ENCODE measurements at regions of chr7 and their contacts with region 1.

Region 1: DNA sequence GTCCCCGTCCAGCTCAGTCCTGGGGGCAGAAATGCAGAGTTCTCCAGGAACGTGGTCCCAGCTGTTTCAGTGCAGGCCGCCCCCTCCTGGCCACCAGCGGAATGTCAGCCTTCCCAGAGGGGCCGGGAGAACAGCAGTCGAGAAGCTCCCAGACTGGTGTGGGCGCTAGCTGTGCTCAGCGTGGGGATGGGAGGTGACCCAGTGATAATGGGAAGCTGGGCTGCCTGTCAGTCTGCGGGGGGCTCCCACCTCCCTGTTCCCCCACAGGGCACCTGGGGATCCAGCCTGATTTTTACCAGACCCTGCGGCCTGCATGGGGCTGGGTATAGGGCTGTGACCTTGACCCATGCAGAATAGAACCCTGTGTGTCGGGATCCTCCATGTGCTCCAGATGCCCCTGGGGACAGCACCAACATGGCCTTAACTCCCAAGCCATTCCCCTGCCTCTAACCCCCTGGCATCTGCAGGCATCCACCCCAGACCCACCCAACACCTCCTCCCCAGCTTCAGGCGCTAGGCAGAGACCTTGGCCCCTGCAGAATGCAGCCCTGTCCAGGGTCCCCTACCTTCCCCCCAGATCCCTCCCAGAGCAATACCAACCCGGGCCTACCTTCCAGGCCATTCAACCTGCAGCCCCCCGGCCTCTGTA is 946 bp upstream of the ELN start:
- DNase-seq: peak; percentile 43 to 64 (median 64)
- H3K4me3 ChIP-seq: peak overlapping the region in 1 of 7 experiments; percentile 19
- H3K27ac ChIP-seq: no peak overlapping the region
- H3K4me1 ChIP-seq: peaks cover 15 to 91% (median 83%) of the 10 kb centered on the region in 4 experiments
- H3K27me3 ChIP-seq: no peaks in the 10 kb centered on the region

Region 2: GRCh38 chr7:73856941-73857340 is 170.1 kb before region 1 on chr7:
- CTCF ChIA-PET with region 1: interaction called, 21 read pairs
- POLR2A ChIA-PET with region 1: interaction called, 7 read pairs
- DNase-seq: no peak
- H3K4me3 ChIP-seq: no peak overlapping the region
- H3K27ac ChIP-seq: no peak overlapping the region
- H3K4me1 ChIP-seq: peaks cover 0 to 7% (median 5%) of the 10 kb centered on the region in 4 experiments
- H3K27me3 ChIP-seq: peaks cover 0 to 21% (median 9%) of the 10 kb centered on the region in 5 experiments

Region 3: GRCh38 chr7:73885975-73886798 is 140.8 kb before region 1 on chr7:
- CTCF ChIA-PET with region 1: interaction called, 84 read pairs
- POLR2A ChIA-PET with region 1: interaction called, 30 read pairs
- DNase-seq: peak; percentile 95 to 99 (median 97)
- H3K4me3 ChIP-seq: peak overlapping the region in 3 of 7 experiments; percentile 7 to 35 (median 24)
- H3K27ac ChIP-seq: peak overlapping the region; percentile 80 to 87
- H3K4me1 ChIP-seq: peaks cover 0 to 49% (median 31%) of the 10 kb centered on the region in 4 experiments
- H3K27me3 ChIP-seq: no peaks in the 10 kb centered on the region

Region 4: DNA sequence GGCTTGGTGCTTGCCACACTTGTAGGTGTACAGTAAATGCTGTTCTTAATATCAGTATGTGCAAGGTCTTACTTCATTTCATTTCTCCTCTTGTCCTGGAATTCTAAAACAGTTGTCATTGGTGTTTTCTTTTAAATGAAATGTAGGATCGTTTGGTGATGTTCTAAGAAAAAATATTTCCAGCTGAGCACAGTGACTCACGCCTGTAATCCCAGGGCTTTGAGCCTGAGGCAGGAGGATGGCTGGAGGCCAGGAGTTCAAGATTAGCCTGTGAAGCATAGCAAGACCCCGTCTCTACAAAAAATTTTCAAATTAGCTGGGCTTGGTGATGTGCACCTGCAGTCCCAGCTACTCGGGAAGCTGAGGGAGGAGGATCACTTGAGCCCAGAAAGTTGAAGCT is 31.7 kb before region 1 on chr7:
- CTCF ChIA-PET with region 1: interaction called, 18 read pairs
- POLR2A ChIA-PET with region 1: interaction called, 7 read pairs
- DNase-seq: no peak
- H3K4me3 ChIP-seq: no peak overlapping the region
- H3K27ac ChIP-seq: no peak overlapping the region
- H3K4me1 ChIP-seq: peaks cover 0 to 7% (median under 1%) of the 10 kb centered on the region in 4 experiments
- H3K27me3 ChIP-seq: no peaks in the 10 kb centered on the region

Region 5: DNA sequence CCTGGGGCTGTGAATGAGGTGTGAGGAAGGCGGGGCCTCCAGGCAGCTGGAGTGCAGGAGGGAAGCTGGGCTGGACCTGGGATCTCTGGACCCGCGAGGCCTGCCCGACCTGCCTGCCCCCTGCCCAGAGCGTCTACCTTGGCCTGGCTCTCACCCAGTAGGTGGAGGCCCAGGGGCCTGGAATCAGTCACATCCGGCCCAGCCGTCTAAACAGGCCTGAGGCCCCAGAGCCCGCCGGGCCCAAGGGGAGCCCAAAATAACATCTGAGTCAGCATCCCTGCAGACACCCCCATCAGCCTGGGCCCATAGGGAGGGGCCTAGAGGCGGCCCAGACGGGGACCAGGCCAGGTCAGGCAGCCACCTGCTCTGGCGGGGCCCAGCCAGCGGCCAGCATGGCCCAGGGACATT is 14.2 kb before region 1 on chr7:
- CTCF ChIA-PET with region 1: interaction called, 98 read pairs
- POLR2A ChIA-PET with region 1: interaction called, 9 read pairs
- DNase-seq: peak; percentile 56 to 90 (median 88)
- H3K4me3 ChIP-seq: peak overlapping the region in 2 of 7 experiments; percentile 16 to 36
- H3K27ac ChIP-seq: no peak overlapping the region
- H3K4me1 ChIP-seq: peaks cover 0 to 44% (median 37%) of the 10 kb centered on the region in 4 experiments
- H3K27me3 ChIP-seq: no peaks in the 10 kb centered on the region

Region 6: DNA sequence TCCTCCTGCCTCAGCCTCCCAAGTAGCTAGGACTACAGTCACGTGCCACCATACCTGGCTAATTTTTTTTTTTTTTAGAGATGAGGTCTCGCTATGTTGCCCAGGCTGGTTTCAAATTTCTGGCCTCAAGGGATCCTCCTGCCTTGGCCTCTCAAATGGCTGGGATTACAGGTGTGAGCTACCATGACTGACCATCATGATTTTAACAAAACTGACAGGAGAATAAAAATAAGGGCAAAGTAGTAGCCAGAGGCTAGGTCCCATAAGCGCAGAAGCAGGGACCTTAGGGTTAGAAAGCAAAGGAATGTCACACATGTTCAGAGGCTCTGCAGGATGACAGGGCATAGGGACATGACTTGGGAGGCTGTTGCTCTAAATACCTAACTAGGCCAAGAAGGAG is 51.4 kb after region 1 on chr7:
- CTCF ChIA-PET with region 1: no interaction called
- POLR2A ChIA-PET with region 1: no interaction called
- DNase-seq: no peak
- H3K4me3 ChIP-seq: no peak overlapping the region
- H3K27ac ChIP-seq: no peak overlapping the region
- H3K4me1 ChIP-seq: peaks cover 0 to 11% (median 7%) of the 10 kb centered on the region in 4 experiments
- H3K27me3 ChIP-seq: no peaks in the 10 kb centered on the region

Measured in common myeloid progenitor, CD34-positive (primary cell).